ENCODE measurements at regions of chr9 and their contacts with region 1.

Region 1: GRCh38 chr9:35871497-35871896 is 1.3 kb upstream of the OR13J1 start:
- DNase-seq: no peak
- ATAC-seq: peak in 2 of 8 donors; percentile 61 to 62
- H3K4me3 ChIP-seq: no peak overlapping the region
- H3K27ac ChIP-seq: no peak overlapping the region
- H3K4me1 ChIP-seq: no peaks in the 10 kb centered on the region
- H3K27me3 ChIP-seq: peaks cover 0 to 22% (median 0%) of the 10 kb centered on the region in 7 donors
- CTCF ChIP-seq: no peak

Region 2: GRCh38 chr9:35829084-35829763 is 42.3 kb before region 1 on chr9 and contains the start of gene TMEM8B:
- intact Hi-C with region 1: loop called in 1 of 10 experiments (anchors 5 kb)
- DNase-seq: peak; percentile 96 to 98
- ATAC-seq: peak; percentile 91 to 94 (median 92)
- H3K4me3 ChIP-seq: peak within 1 kb of the TSS; percentile 70 to 87 (median 82)
- H3K27ac ChIP-seq: peak within 1 kb of the TSS; percentile 91 to 98 (median 96)
- H3K4me1 ChIP-seq: peaks cover 4 to 53% (median 39%) of the 10 kb centered on the region in 9 donors
- H3K27me3 ChIP-seq: no peaks in the 10 kb centered on the region
- CTCF ChIP-seq: no peak
- total RNA-seq, gene TMEM8B: 13.6 to 22.9 (median 20.5) TPM

Measured in heart right ventricle (tissue), 16 donors.